MCF 10A (cell line): ENCODE measurements at regions of chr5 and their contacts with region 1.

Region 1: DNA sequence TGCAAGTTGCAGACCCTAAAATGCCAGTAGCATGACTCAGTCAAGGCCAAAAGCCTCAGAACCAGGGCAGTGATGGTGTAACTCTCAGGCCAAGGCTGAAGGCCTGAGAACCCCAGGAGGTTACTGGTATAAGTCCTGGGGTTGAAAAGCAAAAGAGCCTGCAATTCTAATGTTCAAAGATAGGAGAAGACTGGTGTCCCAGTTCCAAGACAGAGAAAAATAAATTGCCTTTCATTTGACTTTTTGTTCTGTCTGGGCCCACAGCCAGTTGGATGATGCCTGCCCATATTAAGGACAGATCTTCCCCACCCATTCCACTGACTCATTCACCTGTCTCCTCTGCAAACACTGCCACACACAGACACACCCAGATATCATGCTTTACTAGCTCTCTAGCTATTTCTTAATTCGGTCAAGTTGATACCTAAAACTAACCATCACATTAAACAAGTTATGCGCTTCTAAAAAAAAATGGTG is 673.1 kb downstream of the CDH18 start:
- DNase-seq: peak; percentile 90
- H3K4me3 Mint-ChIP-seq: no peak overlapping the region
- H3K27ac Mint-ChIP-seq: peak overlapping the region; percentile 96
- H3K4me1 Mint-ChIP-seq: peaks cover 25% of the 10 kb centered on the region
- H3K27me3 Mint-ChIP-seq: no peaks in the 10 kb centered on the region
- CTCF ChIP-seq: peak; percentile 33

Region 2: DNA sequence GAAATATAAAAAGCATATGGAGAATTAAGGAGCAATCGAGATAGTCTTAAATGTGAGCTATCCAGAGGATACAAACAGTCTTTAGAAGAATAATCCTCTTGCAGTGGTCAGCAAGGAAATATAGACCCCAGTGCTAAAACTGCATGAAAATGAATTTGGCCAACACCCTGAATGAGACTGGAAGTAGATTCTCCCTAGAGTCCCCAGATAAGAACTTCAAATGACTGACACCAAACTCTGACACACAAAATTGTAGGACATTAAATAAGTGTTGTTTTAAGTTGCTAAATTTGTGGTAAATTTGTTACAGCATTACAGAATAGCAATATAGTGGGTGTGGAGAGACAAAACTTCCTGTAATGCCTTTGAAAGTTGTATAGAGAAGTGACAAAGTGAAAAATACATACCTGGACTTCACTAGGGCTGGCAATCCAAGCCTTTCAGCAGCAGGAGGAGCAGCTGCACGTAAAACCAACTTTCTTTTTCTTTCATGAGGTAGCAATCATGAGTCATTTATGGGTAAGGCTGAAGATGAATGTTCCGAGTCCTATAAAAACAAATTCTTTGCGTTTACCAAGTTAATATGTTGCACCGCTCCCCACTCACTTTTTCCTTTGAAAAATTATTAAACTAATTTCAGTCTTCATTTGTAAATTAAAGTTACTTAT is 542.5 kb before region 1 on chr5:
- CTCF ChIA-PET with region 1: interaction called, 7 read pairs
- POLR2A ChIA-PET with region 1: no interaction called
- intact Hi-C with region 1: loop called (anchors 1 kb)
- DNase-seq: peak; percentile 74
- H3K4me3 Mint-ChIP-seq: peak overlapping the region; percentile 50
- H3K27ac Mint-ChIP-seq: peak overlapping the region; percentile 60
- H3K4me1 Mint-ChIP-seq: peaks cover 10% of the 10 kb centered on the region
- H3K27me3 Mint-ChIP-seq: no peaks in the 10 kb centered on the region
- CTCF ChIP-seq: peak; percentile 74

Region 3: GRCh38 chr5:19531374-19531952 is 216.6 kb after region 1 on chr5:
- CTCF ChIA-PET with region 1: interaction called, 3 read pairs
- POLR2A ChIA-PET with region 1: interaction called, 5 read pairs
- intact Hi-C with region 1: loop called (anchors 5 kb)
- DNase-seq: peak; percentile 92
- H3K4me3 Mint-ChIP-seq: peak overlapping the region; percentile 67
- H3K27ac Mint-ChIP-seq: peak overlapping the region; percentile 98
- H3K4me1 Mint-ChIP-seq: peaks cover 25% of the 10 kb centered on the region
- H3K27me3 Mint-ChIP-seq: no peaks in the 10 kb centered on the region
- CTCF ChIP-seq: no peak

Region 4: DNA sequence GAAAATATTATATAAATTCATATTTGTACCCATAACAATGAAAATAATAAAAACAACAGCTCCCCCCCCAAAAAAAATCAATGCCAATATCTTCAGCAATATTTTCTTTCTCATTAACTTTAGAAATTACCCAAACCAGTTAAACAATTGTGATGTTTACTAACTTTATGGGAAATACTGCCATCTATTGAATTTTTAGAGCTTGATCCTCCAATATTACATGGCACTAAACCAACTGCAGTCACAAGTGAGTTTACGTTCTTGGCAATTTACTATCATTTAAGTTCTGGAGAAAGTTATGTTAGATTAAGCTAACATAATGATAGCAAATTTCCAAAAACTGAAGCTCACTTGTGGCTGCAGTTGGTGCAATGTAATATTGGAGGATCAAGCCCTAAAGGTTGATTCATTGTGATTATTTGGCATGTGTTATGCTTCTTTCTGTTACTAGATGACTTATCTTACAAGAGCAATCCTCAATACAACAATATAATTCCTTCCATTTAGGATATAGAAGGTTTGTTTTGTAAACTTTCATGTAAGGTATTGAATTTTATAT is 293.6 kb after region 1 on chr5:
- CTCF ChIA-PET with region 1: interaction called, 7 read pairs
- POLR2A ChIA-PET with region 1: interaction called, 8 read pairs
- intact Hi-C with region 1: loop called (anchors 10 kb)
- DNase-seq: peak; percentile 38
- H3K4me3 Mint-ChIP-seq: no peak overlapping the region
- H3K27ac Mint-ChIP-seq: no peak overlapping the region
- H3K4me1 Mint-ChIP-seq: peaks cover 9% of the 10 kb centered on the region
- H3K27me3 Mint-ChIP-seq: no peaks in the 10 kb centered on the region
- CTCF ChIP-seq: peak; percentile 32